ENCODE measurements at regions of chr7 and their contacts with region 1.

Region 1: GRCh38 chr7:148962823-148963582 is 65.3 kb downstream of the PDIA4 start:
- DNase-seq: peak; percentile 58 to 87 (median 78)
- H3K4me3 ChIP-seq: peak overlapping the region; percentile 48 to 83 (median 66)
- H3K27ac ChIP-seq: peak overlapping the region; percentile 26 to 97 (median 89)
- H3K27me3 ChIP-seq: no peaks in the 10 kb centered on the region
- CTCF ChIP-seq: peak; percentile 39 to 97 (median 85)

Region 2: GRCh38 chr7:148385009-148385682 is 577.9 kb before region 1 on chr7:
- intact Hi-C with region 1: loop called in 1 of 2 experiments (anchors 10 kb)
- DNase-seq: peak in 9 of 10 donors; percentile 34 to 82 (median 67)
- H3K4me3 ChIP-seq: peak overlapping the region in 20 of 59 donors; percentile 3 to 51 (median 13)
- H3K27ac ChIP-seq: peak overlapping the region in 55 of 59 donors; percentile 12 to 93 (median 79)
- H3K27me3 ChIP-seq: no peaks in the 10 kb centered on the region
- CTCF ChIP-seq: peak in 23 of 56 donors; percentile 7 to 52 (median 25)

Region 3: DNA sequence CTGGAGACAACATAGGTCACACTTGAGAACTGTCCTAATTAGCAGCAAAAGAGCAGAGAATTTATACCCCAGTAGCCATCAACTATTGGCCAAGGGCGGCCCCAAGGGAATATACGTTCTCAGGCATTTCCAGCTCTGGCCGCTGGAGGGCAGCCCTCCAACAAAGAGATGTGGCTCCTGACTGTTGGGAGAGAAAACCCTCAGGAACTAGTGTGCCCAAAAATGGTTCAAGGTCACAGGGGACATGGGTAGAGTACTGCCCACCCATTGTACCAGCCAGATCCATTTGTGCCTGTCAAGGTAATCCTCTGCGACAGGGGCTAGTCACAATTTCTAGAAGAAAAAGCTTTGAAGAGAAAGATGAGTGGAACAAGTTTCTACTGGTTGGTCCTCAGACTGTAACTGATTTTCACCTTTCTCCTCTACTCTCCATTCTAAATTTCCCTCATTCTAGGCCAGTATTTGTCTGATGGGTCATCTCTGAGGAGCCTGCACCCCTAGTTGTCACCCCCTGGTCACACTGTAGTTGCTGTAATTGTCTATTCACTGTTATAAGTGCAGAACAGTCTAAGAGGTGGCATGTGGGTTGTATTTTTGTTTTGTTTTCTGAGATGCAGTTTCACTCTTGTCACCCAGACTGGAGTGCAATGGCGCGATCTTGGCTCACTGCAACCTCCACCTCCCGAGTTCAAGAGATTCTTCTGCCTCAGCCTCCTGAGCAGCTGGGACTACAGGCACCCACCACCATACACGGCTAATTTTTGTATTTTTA is 387.2 kb before region 1 on chr7:
- intact Hi-C with region 1: loop called (anchors 1 to 5 kb)
- DNase-seq: peak; percentile 34 to 78 (median 70)
- H3K4me3 ChIP-seq: no peak overlapping the region
- H3K27ac ChIP-seq: no peak overlapping the region
- H3K27me3 ChIP-seq: no peaks in the 10 kb centered on the region
- CTCF ChIP-seq: peak; percentile 53 to 92 (median 81)

Region 4: GRCh38 chr7:148856891-148857290 is 106.1 kb before region 1 on chr7:
- intact Hi-C with region 1: no loop called
- DNase-seq: no peak
- H3K4me3 ChIP-seq: no peak overlapping the region
- H3K27ac ChIP-seq: no peak overlapping the region
- H3K27me3 ChIP-seq: no peaks in the 10 kb centered on the region
- CTCF ChIP-seq: no peak

Region 5: GRCh38 chr7:148884299-148885022 is 78.5 kb before region 1 on chr7:
- intact Hi-C with region 1: loop called in 1 of 2 experiments (anchors 5 kb)
- DNase-seq: peak; percentile 85 to 97 (median 90)
- H3K4me3 ChIP-seq: peak overlapping the region; percentile 59 to 95 (median 86)
- H3K27ac ChIP-seq: peak overlapping the region; percentile 31 to 96 (median 87)
- H3K27me3 ChIP-seq: no peaks in the 10 kb centered on the region
- CTCF ChIP-seq: peak in 17 of 56 donors; percentile 2 to 47 (median 24)

Measured in dorsolateral prefrontal cortex (tissue), 120 donors.